HCT116 (cell line): ENCODE measurements at regions of chr11 and their contacts with region 1.

Region 1: GRCh38 chr11:78645226-78646202 is 70.8 kb upstream of the NARS2 start:
- DNase-seq: peak; percentile 50
- ATAC-seq: peak; percentile 84
- H3K4me3 ChIP-seq: no peak overlapping the region
- H3K27ac ChIP-seq: no peak overlapping the region
- H3K4me1 ChIP-seq: no peaks in the 10 kb centered on the region
- H3K27me3 ChIP-seq: peaks cover 36% of the 10 kb centered on the region
- CTCF ChIP-seq: peak; percentile 65 to 96 (median 96)
- POLR2A ChIP-seq: no peak
- RAD21 ChIP-seq: peak; percentile 87

Region 2: GRCh38 chr11:78100676-78101456 is 544.6 kb before region 1 on chr11:
- CTCF ChIA-PET with region 1: no interaction called
- POLR2A ChIA-PET with region 1: no interaction called
- RAD21 ChIA-PET with region 1: no interaction called
- intact Hi-C with region 1: no loop called
- DNase-seq: no peak
- ATAC-seq: no peak
- H3K4me3 ChIP-seq: no peak overlapping the region
- H3K27ac ChIP-seq: no peak overlapping the region
- H3K4me1 ChIP-seq: no peaks in the 10 kb centered on the region
- H3K27me3 ChIP-seq: no peaks in the 10 kb centered on the region
- CTCF ChIP-seq: no peak
- POLR2A ChIP-seq: no peak
- RAD21 ChIP-seq: no peak

Region 3: DNA sequence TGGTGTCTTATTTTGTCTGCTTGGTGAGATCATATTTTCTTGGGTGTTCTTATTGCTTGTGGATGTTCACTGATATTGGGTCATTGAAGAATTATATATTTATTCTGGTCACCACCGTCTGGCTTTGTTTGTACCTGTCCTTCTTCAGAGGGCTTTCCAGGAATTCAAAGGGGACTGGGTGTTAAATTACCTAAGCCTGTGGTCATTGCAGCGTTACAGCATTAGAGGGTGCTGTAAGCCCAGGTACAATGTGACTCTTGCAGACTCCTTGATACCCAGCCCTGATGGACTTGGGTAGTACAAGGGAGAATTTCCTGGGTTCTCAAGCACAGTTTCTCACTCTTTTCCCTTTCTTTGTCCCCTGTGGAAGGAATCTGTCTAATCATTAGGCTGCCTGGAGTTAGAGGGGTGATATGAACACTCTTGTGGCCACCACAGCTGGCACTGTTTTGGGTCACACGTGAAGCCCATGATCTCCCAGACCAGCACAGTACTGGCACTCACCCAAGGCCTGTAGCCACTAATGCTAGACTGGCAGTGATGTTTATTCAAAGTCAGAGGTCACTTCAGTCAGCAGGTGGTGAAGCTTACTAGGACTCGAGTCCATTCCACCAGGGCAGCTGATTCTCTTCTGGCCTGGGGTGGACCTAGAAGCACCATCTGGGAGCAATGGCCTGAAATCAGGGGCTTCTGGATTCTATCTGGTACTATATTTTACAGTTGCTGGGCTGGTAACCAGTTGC is 14.8 kb before region 1 on chr11:
- CTCF ChIA-PET with region 1: no interaction called
- POLR2A ChIA-PET with region 1: no interaction called
- RAD21 ChIA-PET with region 1: no interaction called
- intact Hi-C with region 1: no loop called
- DNase-seq: no peak
- ATAC-seq: no peak
- H3K4me3 ChIP-seq: no peak overlapping the region
- H3K27ac ChIP-seq: no peak overlapping the region
- H3K4me1 ChIP-seq: no peaks in the 10 kb centered on the region
- H3K27me3 ChIP-seq: no peaks in the 10 kb centered on the region
- CTCF ChIP-seq: peak; percentile 4 to 42 (median 35); a peak in 4 of 6 replicates
- POLR2A ChIP-seq: no peak
- RAD21 ChIP-seq: peak; percentile 31

Region 4: DNA sequence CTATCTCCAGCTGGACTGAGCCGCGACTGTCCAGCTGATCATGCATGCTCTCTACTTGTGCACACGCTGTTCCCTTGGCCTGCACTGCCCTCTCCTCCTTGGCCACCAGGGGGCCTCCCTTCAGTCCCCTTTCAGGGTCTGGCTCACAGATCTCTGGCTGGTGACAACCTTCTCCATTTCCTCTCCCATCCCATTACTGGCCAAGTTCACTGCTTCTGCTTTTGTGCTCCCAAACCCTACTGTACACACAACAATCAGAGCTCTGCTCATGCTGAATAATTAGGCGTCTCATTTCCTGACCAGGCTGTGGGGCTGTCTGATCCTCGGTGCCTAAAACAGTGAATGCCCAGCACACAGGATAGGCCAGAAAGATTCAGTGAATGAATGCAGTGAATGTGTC is 153.1 kb after region 1 on chr11:
- CTCF ChIA-PET with region 1: interaction called, 12 read pairs
- POLR2A ChIA-PET with region 1: interaction called, 3 read pairs
- RAD21 ChIA-PET with region 1: interaction called in 1 of 2 experiments, 3 read pairs
- intact Hi-C with region 1: loop called (anchors 5 kb)
- DNase-seq: peak; percentile 28
- ATAC-seq: peak; percentile 99
- H3K4me3 ChIP-seq: no peak overlapping the region
- H3K27ac ChIP-seq: no peak overlapping the region
- H3K4me1 ChIP-seq: no peaks in the 10 kb centered on the region
- H3K27me3 ChIP-seq: peaks cover 34% of the 10 kb centered on the region
- CTCF ChIP-seq: peak; percentile 68 to 92 (median 89)
- POLR2A ChIP-seq: no peak
- RAD21 ChIP-seq: peak; percentile 59

Region 5: DNA sequence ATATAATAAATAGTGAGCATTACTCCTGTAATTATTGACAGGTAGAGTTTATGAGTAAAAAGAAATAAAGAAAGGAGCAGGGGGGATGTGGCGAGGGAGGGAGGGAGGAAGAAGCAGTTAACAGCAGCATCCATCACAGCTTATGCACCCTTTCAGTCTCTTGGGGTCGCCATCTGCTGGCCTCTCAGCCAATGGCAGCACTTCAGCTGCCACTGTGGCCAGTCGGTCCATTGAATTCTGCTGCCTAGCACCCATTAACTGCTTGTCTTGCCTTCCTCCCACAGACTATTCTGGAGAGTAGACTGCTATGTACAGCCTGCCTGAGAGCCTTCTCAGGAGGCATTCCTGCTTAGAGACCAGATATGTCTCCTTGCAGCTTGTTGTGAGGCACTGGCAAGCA is 407.0 kb after region 1 on chr11:
- CTCF ChIA-PET with region 1: interaction called, 16 read pairs
- POLR2A ChIA-PET with region 1: no interaction called
- RAD21 ChIA-PET with region 1: no interaction called
- intact Hi-C with region 1: no loop called
- DNase-seq: no peak
- ATAC-seq: peak; percentile 75
- H3K4me3 ChIP-seq: no peak overlapping the region
- H3K27ac ChIP-seq: no peak overlapping the region
- H3K4me1 ChIP-seq: peaks cover 3 to 9% of the 10 kb centered on the region in 2 experiments; a peak in 3 of 4 replicates
- H3K27me3 ChIP-seq: peaks cover 21% of the 10 kb centered on the region; the same call in 1 of the 2 replicates
- CTCF ChIP-seq: 0 out of 6 replicates have a peak, but pooled peaks of 2 of the 3 experiments have one; percentile 15 to 18
- POLR2A ChIP-seq: no peak
- RAD21 ChIP-seq: no peak

Region 6: DNA sequence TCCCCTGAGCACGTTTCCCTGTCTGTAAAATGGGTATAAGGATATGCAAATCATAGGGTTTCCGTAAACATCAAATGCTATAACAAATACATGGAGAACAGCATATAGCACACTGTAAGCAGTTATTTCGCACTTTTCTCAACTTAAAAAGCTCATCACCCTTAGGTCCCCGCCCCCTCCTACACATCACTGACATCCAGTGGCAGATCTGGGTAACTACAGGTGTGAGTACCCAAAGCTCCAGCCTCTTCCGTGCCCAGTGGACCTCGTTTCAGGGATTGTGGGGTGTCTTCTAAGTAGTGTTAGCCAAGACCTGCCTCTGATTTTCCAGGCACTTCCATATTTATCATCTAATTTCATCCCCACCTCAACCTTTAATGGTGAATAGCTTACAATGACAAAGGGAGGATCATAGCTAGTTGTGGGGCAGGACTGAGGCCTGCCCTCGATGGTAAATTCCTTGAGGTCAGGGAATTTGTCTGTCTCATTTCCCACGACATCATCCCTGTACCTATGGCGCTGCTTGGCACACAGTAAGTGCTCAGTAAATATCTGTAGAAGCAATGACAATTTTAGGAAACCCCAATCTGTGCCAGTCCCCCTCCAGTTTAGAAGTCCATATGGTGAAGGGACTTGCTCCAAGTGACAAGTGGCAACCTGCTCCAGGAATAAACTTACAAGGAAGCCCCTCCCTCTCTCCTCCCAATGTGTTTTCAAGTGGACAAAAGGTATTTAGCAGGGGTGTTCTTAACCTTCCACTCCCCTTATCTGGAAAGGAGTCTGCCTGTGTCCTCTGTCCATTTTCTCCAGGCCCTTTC is 454.8 kb after region 1 on chr11:
- CTCF ChIA-PET with region 1: interaction called, 54 read pairs
- POLR2A ChIA-PET with region 1: interaction called, 3 read pairs
- RAD21 ChIA-PET with region 1: interaction called, 3 read pairs
- intact Hi-C with region 1: loop called (anchors 1 kb)
- DNase-seq: peak; percentile 12
- ATAC-seq: peak; percentile 92
- H3K4me3 ChIP-seq: no peak overlapping the region
- H3K27ac ChIP-seq: no peak overlapping the region
- H3K4me1 ChIP-seq: no peaks in the 10 kb centered on the region
- H3K27me3 ChIP-seq: peaks cover 16% of the 10 kb centered on the region
- CTCF ChIP-seq: peak; percentile 33 to 74 (median 71); a peak in 5 of 6 replicates
- POLR2A ChIP-seq: no peak
- RAD21 ChIP-seq: peak; percentile 66

Region 7: DNA sequence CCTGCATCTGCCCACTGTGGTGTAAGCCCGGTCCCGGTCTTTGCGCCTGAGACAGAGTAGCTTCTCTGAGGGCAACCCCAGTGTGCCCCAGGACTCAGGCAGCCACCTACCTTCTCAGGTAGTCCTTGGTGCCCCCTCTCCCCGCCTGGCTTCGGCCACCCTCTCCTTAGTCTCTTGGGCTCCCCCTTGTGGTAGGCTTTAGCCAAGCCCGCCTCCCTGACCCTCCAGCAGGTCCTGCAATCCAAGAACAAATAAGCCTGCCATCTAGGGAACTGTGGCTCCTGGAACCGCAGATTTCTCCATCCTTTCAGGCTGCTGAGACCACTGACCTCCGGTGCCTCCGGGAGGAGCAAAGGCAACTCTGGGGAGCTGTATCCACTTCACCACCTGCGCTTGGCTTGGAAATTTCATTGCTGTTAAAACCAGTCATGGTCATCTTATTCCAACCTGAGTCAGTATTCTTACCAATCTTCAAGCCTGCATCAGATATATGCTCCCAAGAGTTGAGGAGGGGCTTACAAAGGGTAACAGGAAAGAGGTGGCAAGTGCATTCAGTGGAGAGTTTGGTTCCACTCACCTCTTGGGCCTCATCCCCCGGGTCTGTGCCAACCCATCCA is 848.1 kb after region 1 on chr11:
- CTCF ChIA-PET with region 1: no interaction called
- POLR2A ChIA-PET with region 1: no interaction called
- RAD21 ChIA-PET with region 1: no interaction called
- intact Hi-C with region 1: loop called (anchors 2 kb)
- DNase-seq: peak; percentile 19
- ATAC-seq: peak; percentile 92
- H3K4me3 ChIP-seq: no peak overlapping the region
- H3K27ac ChIP-seq: no peak overlapping the region
- H3K4me1 ChIP-seq: no peaks in the 10 kb centered on the region
- H3K27me3 ChIP-seq: no peaks in the 10 kb centered on the region
- CTCF ChIP-seq: peak; percentile 35 to 78 (median 78); a peak in 5 of 6 replicates
- POLR2A ChIP-seq: no peak
- RAD21 ChIP-seq: peak; percentile 49

Region 8: GRCh38 chr11:79610678-79611077 is 965.2 kb after region 1 on chr11:
- CTCF ChIA-PET with region 1: no interaction called
- POLR2A ChIA-PET with region 1: no interaction called
- RAD21 ChIA-PET with region 1: no interaction called
- intact Hi-C with region 1: no loop called
- DNase-seq: no peak
- ATAC-seq: no peak
- H3K4me3 ChIP-seq: no peak overlapping the region
- H3K27ac ChIP-seq: no peak overlapping the region
- H3K4me1 ChIP-seq: no peaks in the 10 kb centered on the region
- H3K27me3 ChIP-seq: no peaks in the 10 kb centered on the region
- CTCF ChIP-seq: no peak
- POLR2A ChIP-seq: no peak
- RAD21 ChIP-seq: no peak